HEK293 (cell line): ENCODE measurements at regions of chr14 and their contacts with region 1.

Region 1: GRCh38 chr14:61152851-61153364 is 128.2 kb downstream of the TMEM30B start:
- H3K4me3 ChIP-seq: no peak overlapping the region
- H3K27ac ChIP-seq: no peak overlapping the region
- H3K4me1 ChIP-seq: no peaks in the 10 kb centered on the region
- CTCF ChIP-seq: no peak

Region 2: GRCh38 chr14:60989599-60989998 is 163.3 kb before region 1 on chr14:
- CTCF ChIA-PET with region 1: interaction called, 15 read pairs
- POLR2A ChIA-PET with region 1: no interaction called
- H3K4me3 ChIP-seq: no peak overlapping the region
- H3K27ac ChIP-seq: no peak overlapping the region
- H3K4me1 ChIP-seq: no peaks in the 10 kb centered on the region
- CTCF ChIP-seq: no peak